Activated CD4-positive, alpha-beta memory T cell treated with anti-CD3 and anti-CD28 coated beads for 36 hours (primary cell): ENCODE measurements at regions of chr15 and their contacts with region 1.

Region 1: GRCh38 chr15:52679232-52680040 is at the start of gene ATOSA:
- DNase-seq: peak; percentile 95
- H3K4me3 Mint-ChIP-seq: peak within 1 kb of the TSS; percentile 100
- H3K27ac Mint-ChIP-seq: peak within 1 kb of the TSS; percentile 97
- H3K4me1 Mint-ChIP-seq: peaks cover 47% of the 10 kb centered on the region
- H3K27me3 Mint-ChIP-seq: no peaks in the 10 kb centered on the region
- total RNA-seq, gene ATOSA: 18.2 to 19.3 TPM

Region 2: GRCh38 chr15:52256366-52256765 is 423.1 kb before region 1 on chr15:
- CTCF ChIA-PET with region 1: interaction called, 4 read pairs
- POLR2A ChIA-PET with region 1: no interaction called
- intact Hi-C with region 1: loop called (anchors 1 kb)
- DNase-seq: peak; percentile 84
- H3K4me3 Mint-ChIP-seq: peak overlapping the region; percentile 37
- H3K27ac Mint-ChIP-seq: peak overlapping the region; percentile 56
- H3K4me1 Mint-ChIP-seq: peaks cover 23% of the 10 kb centered on the region
- H3K27me3 Mint-ChIP-seq: no peaks in the 10 kb centered on the region

Region 3: GRCh38 chr15:52331490-52332240 is 347.8 kb before region 1 on chr15:
- CTCF ChIA-PET with region 1: no interaction called
- POLR2A ChIA-PET with region 1: no interaction called
- intact Hi-C with region 1: loop called (anchors 2 kb)
- DNase-seq: peak; percentile 76
- H3K4me3 Mint-ChIP-seq: no peak overlapping the region
- H3K27ac Mint-ChIP-seq: peak overlapping the region; percentile 82
- H3K4me1 Mint-ChIP-seq: peaks cover 18% of the 10 kb centered on the region
- H3K27me3 Mint-ChIP-seq: no peaks in the 10 kb centered on the region

Region 4: GRCh38 chr15:52481915-52482314 is 197.5 kb before region 1 on chr15:
- CTCF ChIA-PET with region 1: no interaction called
- POLR2A ChIA-PET with region 1: no interaction called
- intact Hi-C with region 1: loop called (anchors 5 kb)
- DNase-seq: peak; percentile 60
- H3K4me3 Mint-ChIP-seq: no peak overlapping the region
- H3K27ac Mint-ChIP-seq: peak overlapping the region; percentile 53
- H3K4me1 Mint-ChIP-seq: peaks cover 67% of the 10 kb centered on the region
- H3K27me3 Mint-ChIP-seq: no peaks in the 10 kb centered on the region

Region 5: GRCh38 chr15:52568601-52569256 is 110.7 kb before region 1 on chr15 and contains the start of gene ARPP19:
- CTCF ChIA-PET with region 1: no interaction called
- POLR2A ChIA-PET with region 1: no interaction called
- intact Hi-C with region 1: loop called (anchors 1 kb)
- DNase-seq: peak; percentile 91
- H3K4me3 Mint-ChIP-seq: peak within 1 kb of the TSS; percentile 98
- H3K27ac Mint-ChIP-seq: peak within 1 kb of the TSS; percentile 96
- H3K4me1 Mint-ChIP-seq: peaks cover 30% of the 10 kb centered on the region
- H3K27me3 Mint-ChIP-seq: no peaks in the 10 kb centered on the region
- total RNA-seq, gene ARPP19: 172 to 183 TPM

Region 6: GRCh38 chr15:52710050-52710707 is 30.7 kb after region 1 on chr15:
- CTCF ChIA-PET with region 1: no interaction called
- POLR2A ChIA-PET with region 1: interaction called, 4 read pairs
- intact Hi-C with region 1: loop called (anchors 2 kb)
- DNase-seq: peak; percentile 17
- H3K4me3 Mint-ChIP-seq: no peak overlapping the region
- H3K27ac Mint-ChIP-seq: peak overlapping the region; percentile 46
- H3K4me1 Mint-ChIP-seq: peaks cover 10% of the 10 kb centered on the region
- H3K27me3 Mint-ChIP-seq: no peaks in the 10 kb centered on the region

Region 7: GRCh38 chr15:52735231-52736089 is 56.0 kb after region 1 on chr15:
- CTCF ChIA-PET with region 1: interaction called, 10 read pairs
- POLR2A ChIA-PET with region 1: no interaction called
- intact Hi-C with region 1: loop called (anchors 1 kb)
- DNase-seq: peak; percentile 75
- H3K4me3 Mint-ChIP-seq: no peak overlapping the region
- H3K27ac Mint-ChIP-seq: no peak overlapping the region
- H3K4me1 Mint-ChIP-seq: peaks cover 10% of the 10 kb centered on the region
- H3K27me3 Mint-ChIP-seq: peaks cover 1% of the 10 kb centered on the region